SK-N-SH (cell line): ENCODE measurements at regions of chr4 and their contacts with region 1.

Region 1: DNA sequence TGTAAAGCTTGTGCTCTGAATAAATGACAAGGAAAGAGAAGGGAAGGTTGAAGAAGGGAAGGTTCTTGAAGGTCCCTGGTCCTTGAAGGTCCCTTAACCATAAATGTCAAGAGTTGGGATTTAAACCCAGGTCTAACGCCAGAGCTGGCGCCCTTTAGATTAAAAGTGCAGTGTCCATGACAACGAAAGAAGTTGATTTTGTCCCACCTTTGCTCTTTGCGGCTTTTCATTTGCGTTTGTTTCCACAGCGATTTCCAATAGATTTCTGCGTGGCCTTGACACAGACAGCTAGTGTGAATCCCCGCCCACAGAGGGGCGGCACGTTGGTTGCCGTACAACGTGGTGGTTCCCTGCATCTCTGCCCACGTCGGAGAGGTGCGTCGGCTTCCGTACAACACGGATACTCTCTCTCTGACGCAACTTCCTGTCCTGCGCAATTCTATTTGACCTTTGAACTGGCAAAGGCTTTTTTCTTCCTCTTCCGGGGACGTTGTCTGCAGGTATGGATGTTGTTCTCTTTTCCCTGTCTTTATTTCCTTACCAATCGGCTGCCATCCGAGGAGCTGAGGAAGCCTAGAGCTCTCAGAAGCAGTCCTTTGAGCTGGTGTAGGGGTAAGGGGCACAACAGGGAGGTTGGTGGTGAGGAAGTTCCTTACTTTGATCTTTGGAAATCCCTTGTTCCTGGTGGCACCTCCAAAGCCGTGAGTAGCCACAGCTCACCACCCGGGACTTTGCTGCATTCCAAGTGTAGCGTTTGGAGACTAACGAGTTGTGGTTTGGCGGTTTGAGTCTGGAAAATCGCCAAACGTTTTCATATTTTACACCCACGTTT is at the start of gene RPL34:
- DNase-seq: peak; percentile 85
- H3K4me3 ChIP-seq: peak within 1 kb of the TSS; percentile 97 to 99
- H3K27ac ChIP-seq: peak within 1 kb of the TSS; percentile 70 to 95
- H3K4me1 ChIP-seq: peaks cover 14 to 23% of the 10 kb centered on the region in 2 experiments; a peak in 3 of 4 replicates
- H3K27me3 ChIP-seq: no peaks in the 10 kb centered on the region
- CTCF ChIP-seq: no peak
- EP300 ChIP-seq: no peak
- RAD21 ChIP-seq: no peak
- polyA plus RNA-seq, gene RPL34: 2,955 and 5,356 TPM in 2 replicates

Region 2: GRCh38 chr4:108370291-108371141 is 249.8 kb before region 1 on chr4:
- CTCF ChIA-PET with region 1: no interaction called
- POLR2A ChIA-PET with region 1: no interaction called
- DNase-seq: no peak
- H3K4me3 ChIP-seq: no peak overlapping the region
- H3K27ac ChIP-seq: no peak overlapping the region
- H3K4me1 ChIP-seq: no peaks in the 10 kb centered on the region
- H3K27me3 ChIP-seq: peaks cover 59% of the 10 kb centered on the region
- CTCF ChIP-seq: no peak
- EP300 ChIP-seq: no peak
- RAD21 ChIP-seq: no peak

Region 3: GRCh38 chr4:108650212-108651013 is 30.1 kb after region 1 on chr4 and contains the start of gene OSTC:
- CTCF ChIA-PET with region 1: no interaction called
- POLR2A ChIA-PET with region 1: interaction called, 18 read pairs
- DNase-seq: peak; percentile 86
- H3K4me3 ChIP-seq: peak within 1 kb of the TSS; percentile 80 to 96
- H3K27ac ChIP-seq: peak within 1 kb of the TSS; percentile 75 to 88
- H3K4me1 ChIP-seq: peaks cover 6 to 8% of the 10 kb centered on the region in 2 experiments; a peak in 3 of 4 replicates
- H3K27me3 ChIP-seq: no peaks in the 10 kb centered on the region
- CTCF ChIP-seq: no peak
- EP300 ChIP-seq: no peak
- RAD21 ChIP-seq: no peak
- polyA plus RNA-seq, gene OSTC: 107 and 134 TPM in 2 replicates

Region 4: DNA sequence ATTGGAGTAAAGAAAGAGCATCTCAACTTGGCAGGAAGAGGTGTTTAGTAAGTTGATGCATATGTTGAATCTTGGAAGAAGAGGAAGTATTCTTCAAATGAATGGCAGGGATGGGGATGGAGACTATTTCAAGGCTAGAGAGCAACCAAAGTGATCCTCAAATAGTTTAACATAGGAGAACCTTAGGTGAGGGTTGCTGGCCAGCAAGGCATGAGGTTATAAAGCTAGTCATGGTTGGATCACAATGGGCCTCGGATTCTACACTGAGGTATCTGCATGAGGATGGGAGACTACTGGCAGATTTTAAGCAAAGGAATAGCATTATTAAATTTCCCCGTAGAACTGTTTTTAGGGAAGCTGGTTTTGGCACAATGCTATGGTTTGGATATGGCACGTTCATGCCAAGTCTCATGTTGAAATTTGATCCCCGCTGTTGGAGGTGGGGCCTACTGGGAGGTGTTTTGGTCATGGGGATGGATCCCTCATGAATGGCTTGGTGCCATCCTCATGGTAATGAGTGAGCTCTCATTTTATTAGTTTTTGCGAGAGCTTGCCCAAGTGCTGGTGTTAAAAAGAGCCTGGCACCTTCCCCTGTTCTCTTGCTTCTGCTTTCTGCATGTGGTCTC is 184.4 kb after region 1 on chr4:
- CTCF ChIA-PET with region 1: no interaction called
- POLR2A ChIA-PET with region 1: no interaction called
- DNase-seq: no peak
- H3K4me3 ChIP-seq: no peak overlapping the region
- H3K27ac ChIP-seq: no peak overlapping the region
- H3K4me1 ChIP-seq: no peaks in the 10 kb centered on the region
- H3K27me3 ChIP-seq: no peaks in the 10 kb centered on the region; the same call in 1 of the 2 replicates
- CTCF ChIP-seq: no peak
- EP300 ChIP-seq: no peak
- RAD21 ChIP-seq: no peak